Naive thymus-derived CD4-positive, alpha-beta T cell (primary cell): ENCODE measurements at regions of chr10 and their contacts with region 1.

Region 1: GRCh38 chr10:62594093-62594520 is 210.4 kb upstream of the ADO start:
- DNase-seq: peak in 8 of 9 donors; percentile 22 to 58 (median 40)
- ATAC-seq: peak; percentile 84
- H3K4me3 ChIP-seq: no peak overlapping the region
- H3K4me3 Mint-ChIP-seq: no peak overlapping the region
- H3K27ac ChIP-seq: no peak overlapping the region
- H3K27ac Mint-ChIP-seq: no peak overlapping the region
- H3K4me1 ChIP-seq: no peaks in the 10 kb centered on the region
- H3K4me1 Mint-ChIP-seq: peaks cover 0 to 4% (median 0%) of the 10 kb centered on the region in 7 donors
- H3K27me3 ChIP-seq: no peaks in the 10 kb centered on the region
- H3K27me3 Mint-ChIP-seq: peaks cover 0 to 26% (median 10%) of the 10 kb centered on the region in 5 donors

Region 2: DNA sequence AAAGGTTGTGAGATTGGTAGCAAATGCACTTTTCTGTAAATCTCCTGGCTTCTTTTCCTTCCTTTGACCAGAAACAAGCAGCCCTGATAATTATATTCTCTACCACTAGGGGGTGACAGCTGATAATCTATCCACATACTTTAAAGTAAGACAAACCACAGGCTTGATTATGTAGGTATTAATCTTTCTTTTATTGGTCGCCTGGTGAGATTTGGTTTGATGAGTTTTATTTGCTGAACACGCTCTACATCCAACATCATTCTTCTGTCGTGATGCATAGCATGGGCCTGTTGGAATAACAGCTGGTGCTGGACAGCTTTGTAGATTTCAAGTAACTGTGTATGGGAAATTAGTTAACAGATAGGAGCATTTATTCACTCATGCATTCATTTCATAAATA is 156.4 kb before region 1 on chr10:
- CTCF ChIA-PET with region 1: no interaction called
- POLR2A ChIA-PET with region 1: no interaction called
- intact Hi-C with region 1: loop called (anchors 1 kb)
- DNase-seq: peak in 7 of 9 donors; percentile 42 to 71 (median 65)
- ATAC-seq: peak; percentile 79
- H3K4me3 ChIP-seq: no peak overlapping the region
- H3K4me3 Mint-ChIP-seq: no peak overlapping the region
- H3K27ac ChIP-seq: no peak overlapping the region
- H3K27ac Mint-ChIP-seq: no peak overlapping the region
- H3K4me1 ChIP-seq: no peaks in the 10 kb centered on the region
- H3K4me1 Mint-ChIP-seq: peaks cover 0 to 12% (median 3%) of the 10 kb centered on the region in 7 donors
- H3K27me3 ChIP-seq: no peaks in the 10 kb centered on the region
- H3K27me3 Mint-ChIP-seq: peaks cover 0 to 24% (median 4%) of the 10 kb centered on the region in 5 donors

Region 3: GRCh38 chr10:63003816-63004453 is 409.8 kb after region 1 on chr10:
- CTCF ChIA-PET with region 1: no interaction called
- POLR2A ChIA-PET with region 1: no interaction called
- intact Hi-C with region 1: loop called in 1 of 2 experiments (anchors 10 kb)
- DNase-seq: no peak
- ATAC-seq: no peak
- H3K4me3 ChIP-seq: no peak overlapping the region
- H3K4me3 Mint-ChIP-seq: no peak overlapping the region
- H3K27ac ChIP-seq: no peak overlapping the region
- H3K27ac Mint-ChIP-seq: no peak overlapping the region
- H3K4me1 ChIP-seq: no peaks in the 10 kb centered on the region
- H3K4me1 Mint-ChIP-seq: no peaks in the 10 kb centered on the region
- H3K27me3 ChIP-seq: no peaks in the 10 kb centered on the region
- H3K27me3 Mint-ChIP-seq: peaks cover 6 to 26% (median 16%) of the 10 kb centered on the region in 5 donors